A673 (cell line): ENCODE measurements at regions of chr17 and their contacts with region 1.

Region 1: DNA sequence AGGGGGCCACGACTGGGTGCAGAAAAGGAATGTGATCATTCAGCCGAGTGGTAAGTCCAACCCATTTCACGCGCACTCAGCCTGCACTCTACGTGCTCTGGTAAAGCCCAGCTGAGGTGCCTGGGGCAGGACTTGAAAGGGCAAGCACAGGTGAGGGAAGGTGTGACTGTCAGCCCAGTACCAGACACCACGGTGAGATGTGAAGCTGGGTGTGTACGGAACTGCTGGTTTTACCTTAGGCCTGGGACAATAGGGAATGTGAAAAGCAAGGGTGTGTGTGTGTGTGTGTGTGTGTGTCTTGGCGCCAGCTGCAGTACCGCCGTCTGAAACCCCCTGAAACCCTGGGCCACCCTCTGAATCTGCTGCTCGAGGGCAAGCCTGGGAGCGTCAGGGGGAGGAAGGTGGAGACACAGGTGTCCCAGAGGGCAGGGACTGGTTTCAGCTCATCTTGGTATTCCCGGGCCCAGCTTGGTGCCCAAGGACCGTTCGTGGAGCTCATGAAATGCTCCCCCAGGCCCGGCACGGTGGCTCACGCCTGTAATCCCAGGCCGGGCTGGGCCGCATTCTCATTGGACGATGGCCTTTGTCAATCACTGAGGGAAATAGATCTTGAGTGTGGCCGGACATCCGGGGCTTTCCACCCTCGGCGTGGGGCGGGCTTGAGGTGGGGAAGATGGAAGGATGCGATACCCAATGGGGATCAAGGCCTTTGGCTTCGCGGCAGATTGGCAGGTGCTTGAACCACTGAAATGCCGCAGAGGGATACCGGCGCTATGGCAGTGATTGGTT is 27.8 kb upstream of the ST6GALNAC1 start:
- DNase-seq: peak; percentile 100
- H3K4me3 ChIP-seq: peak overlapping the region; percentile 66
- H3K27ac ChIP-seq: peak overlapping the region; percentile 64
- H3K4me1 ChIP-seq: peaks cover 16% of the 10 kb centered on the region
- H3K27me3 ChIP-seq: no peaks in the 10 kb centered on the region
- CTCF ChIP-seq: no peak

Region 2: GRCh38 chr17:76557368-76558197 is 113.7 kb before region 1 on chr17:
- CTCF ChIA-PET with region 1: no interaction called
- POLR2A ChIA-PET with region 1: no interaction called
- intact Hi-C with region 1: loop called (anchors 5 kb)
- DNase-seq: peak; percentile 98
- H3K4me3 ChIP-seq: peak overlapping the region; percentile 71
- H3K27ac ChIP-seq: peak overlapping the region; percentile 88
- H3K4me1 ChIP-seq: peaks cover 32% of the 10 kb centered on the region
- H3K27me3 ChIP-seq: no peaks in the 10 kb centered on the region
- CTCF ChIP-seq: peak; percentile 72